ENCODE measurements at regions of chr9 and their contacts with region 1.

Region 1: DNA sequence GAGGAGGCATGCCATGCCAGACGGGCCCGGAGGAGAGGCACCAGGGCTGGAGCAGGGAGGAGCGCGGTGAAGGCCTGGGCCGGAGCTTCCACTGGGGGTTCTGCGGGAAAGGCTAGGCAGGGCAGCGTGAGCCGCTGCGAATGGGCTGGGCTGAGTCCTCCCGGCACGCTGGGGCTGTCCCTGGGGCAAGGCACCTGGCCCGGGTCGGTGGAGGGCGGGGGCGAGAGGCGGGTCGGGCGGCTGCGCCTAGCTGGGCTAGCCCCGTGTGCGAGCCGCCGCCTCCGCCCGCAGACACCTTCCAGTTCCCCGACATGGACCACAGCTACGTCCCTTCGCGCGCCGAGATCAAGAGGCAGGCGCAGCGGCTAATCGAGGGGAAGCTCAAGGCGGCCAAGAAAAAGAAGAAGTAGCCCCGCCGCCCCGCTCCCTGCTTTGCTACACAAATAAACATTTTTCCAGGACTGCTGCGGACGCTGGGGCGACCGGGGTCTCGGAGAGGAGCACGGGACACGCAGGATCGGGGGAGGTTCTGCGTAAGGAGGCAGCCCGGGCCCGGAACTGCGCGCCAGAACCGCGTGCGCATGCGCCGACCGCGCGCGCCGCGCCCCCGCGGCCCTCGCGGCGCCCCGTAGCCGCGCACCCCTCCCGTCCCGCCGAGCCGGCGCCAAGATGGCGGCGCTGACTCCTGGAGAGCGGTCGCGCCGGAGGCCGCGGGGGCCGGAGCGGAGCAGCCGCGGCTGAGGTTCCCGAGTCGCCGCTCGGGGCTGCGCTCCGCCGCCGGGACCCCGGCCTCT is at the start of gene RABL6:
- DNase-seq: no peak
- H3K4me3 ChIP-seq: peak within 1 kb of the TSS; percentile 61 to 88 (median 74)
- H3K27ac ChIP-seq: peak within 1 kb of the TSS; percentile 61
- H3K4me1 ChIP-seq: peaks cover 15% of the 10 kb centered on the region
- H3K27me3 ChIP-seq: no peaks in the 10 kb centered on the region
- CTCF ChIP-seq: no peak
- polyA plus RNA-seq, gene RABL6: 46.3 to 51.1 TPM (median 51.0 TPM) in 3 replicates

Region 2: GRCh38 chr9:136944519-136945279 is 137.2 kb after region 1 on chr9 and contains the starts of genes C8G and FBXW5:
- dilution Hi-C with region 1: loop called (anchors 25 kb)
- DNase-seq: peak; percentile 36
- H3K4me3 ChIP-seq: peak within 1 kb of the TSS; percentile 73 to 87 (median 85)
- H3K27ac ChIP-seq: peak within 1 kb of the TSS; percentile 67
- H3K4me1 ChIP-seq: peaks cover 14% of the 10 kb centered on the region
- H3K27me3 ChIP-seq: no peaks in the 10 kb centered on the region
- CTCF ChIP-seq: peak in 2 of 3 experiments; percentile 81 to 97
- polyA plus RNA-seq, gene C8G: 0.24 to 0.72 TPM (median 0.32 TPM) in 3 replicates
- polyA plus RNA-seq, gene FBXW5: 23.0 to 47.2 TPM (median 34.5 TPM) in 3 replicates